Naive thymus-derived CD4-positive, alpha-beta T cell (primary cell): ENCODE measurements at regions of chr1 and their contacts with region 1.

Region 1: GRCh38 chr1:181088079-181089016 is at the start of gene IER5:
- DNase-seq: peak; percentile 86 to 97 (median 92)
- ATAC-seq: peak; percentile 82
- H3K4me3 ChIP-seq: peak within 1 kb of the TSS; percentile 83
- H3K4me3 Mint-ChIP-seq: peak within 1 kb of the TSS; percentile 89 to 100 (median 99)
- H3K27ac ChIP-seq: peak within 1 kb of the TSS; percentile 98
- H3K27ac Mint-ChIP-seq: peak within 1 kb of the TSS; percentile 92 to 98 (median 97)
- H3K4me1 ChIP-seq: peaks cover 12 to 23% of the 10 kb centered on the region in 2 donors
- H3K4me1 Mint-ChIP-seq: peaks cover 25 to 56% (median 46%) of the 10 kb centered on the region in 7 donors
- H3K27me3 ChIP-seq: no peaks in the 10 kb centered on the region
- H3K27me3 Mint-ChIP-seq: peaks cover 0 to 9% (median 0%) of the 10 kb centered on the region in 5 donors
- total RNA-seq, gene IER5: 12.7 to 86.9 (median 46.0) TPM

Region 2: GRCh38 chr1:180515864-180516388 is 572.4 kb before region 1 on chr1:
- CTCF ChIA-PET with region 1: interaction called, 3 read pairs
- POLR2A ChIA-PET with region 1: interaction called, 3 read pairs
- intact Hi-C with region 1: loop called in 1 of 2 experiments (anchors 1 kb)
- DNase-seq: peak in 8 of 9 donors; percentile 33 to 65 (median 53)
- ATAC-seq: peak; percentile 94
- H3K4me3 ChIP-seq: no peak overlapping the region
- H3K4me3 Mint-ChIP-seq: no peak overlapping the region
- H3K27ac ChIP-seq: no peak overlapping the region
- H3K27ac Mint-ChIP-seq: no peak overlapping the region
- H3K4me1 ChIP-seq: no peaks in the 10 kb centered on the region
- H3K4me1 Mint-ChIP-seq: peaks cover 0 to 3% (median 0%) of the 10 kb centered on the region in 7 donors
- H3K27me3 ChIP-seq: no peaks in the 10 kb centered on the region
- H3K27me3 Mint-ChIP-seq: peaks cover 0 to 13% (median 10%) of the 10 kb centered on the region in 5 donors

Region 3: DNA sequence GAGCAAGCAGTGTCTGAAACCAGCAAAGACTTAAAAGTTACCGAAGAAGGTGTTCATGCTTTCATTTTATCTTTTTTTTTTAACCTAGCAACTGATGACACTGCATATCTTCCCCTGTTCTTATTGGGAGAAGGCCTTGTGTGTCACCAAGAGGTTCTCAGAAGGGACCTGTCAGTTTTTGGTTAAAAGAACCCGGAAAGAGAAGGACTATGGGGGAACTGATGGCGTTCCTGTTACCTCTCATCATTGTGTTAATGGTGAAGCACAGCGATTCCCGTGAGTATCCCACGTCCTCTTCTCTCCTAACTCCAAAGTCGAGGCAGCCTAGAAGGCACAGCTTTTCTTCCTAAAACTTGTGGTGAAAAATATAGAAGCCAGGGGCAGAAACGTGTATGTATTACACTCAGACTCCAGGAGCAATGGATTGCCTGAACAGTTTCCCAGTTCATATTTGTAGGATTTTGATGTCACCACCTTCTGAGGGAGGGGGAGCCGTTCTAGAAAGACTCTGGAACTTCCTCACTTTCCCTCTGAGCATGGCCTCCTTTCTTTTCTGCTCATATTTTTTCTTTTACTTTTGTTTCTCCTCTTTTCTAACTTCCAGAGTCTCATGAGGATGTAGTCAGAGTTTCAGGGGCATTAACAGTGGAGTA is 54.4 kb before region 1 on chr1 and contains the start of gene MR1:
- CTCF ChIA-PET with region 1: interaction called, 5 read pairs
- POLR2A ChIA-PET with region 1: interaction called, 18 read pairs
- intact Hi-C with region 1: loop called (anchors 1 kb)
- DNase-seq: peak in 8 of 9 donors; percentile 32 to 92 (median 88)
- ATAC-seq: peak; percentile 97
- H3K4me3 ChIP-seq: peak within 1 kb of the TSS; percentile 77
- H3K4me3 Mint-ChIP-seq: peak within 1 kb of the TSS; percentile 84 to 99 (median 97)
- H3K27ac ChIP-seq: peak within 1 kb of the TSS; percentile 95
- H3K27ac Mint-ChIP-seq: peak within 1 kb of the TSS; percentile 95 to 100 (median 98)
- H3K4me1 ChIP-seq: peaks cover 32 to 42% of the 10 kb centered on the region in 2 donors
- H3K4me1 Mint-ChIP-seq: peaks cover 39 to 69% (median 61%) of the 10 kb centered on the region in 7 donors
- H3K27me3 ChIP-seq: no peaks in the 10 kb centered on the region
- H3K27me3 Mint-ChIP-seq: peaks cover 0 to 6% (median 0%) of the 10 kb centered on the region in 5 donors
- total RNA-seq, gene MR1: 19.8 to 35.8 (median 29.7) TPM

Region 4: GRCh38 chr1:181105134-181106021 is 17.0 kb after region 1 on chr1:
- CTCF ChIA-PET with region 1: interaction called, 4 read pairs
- POLR2A ChIA-PET with region 1: interaction called, 264 read pairs
- intact Hi-C with region 1: loop called (anchors 1 kb)
- DNase-seq: peak; percentile 81 to 94 (median 90)
- ATAC-seq: peak; percentile 94
- H3K4me3 ChIP-seq: peak overlapping the region; percentile 61
- H3K4me3 Mint-ChIP-seq: peak overlapping the region; percentile 84 to 96 (median 91)
- H3K27ac ChIP-seq: peak overlapping the region; percentile 85
- H3K27ac Mint-ChIP-seq: peak overlapping the region; percentile 69 to 97 (median 89)
- H3K4me1 ChIP-seq: peaks cover 16 to 20% of the 10 kb centered on the region in 2 donors
- H3K4me1 Mint-ChIP-seq: peaks cover 22 to 76% (median 61%) of the 10 kb centered on the region in 7 donors
- H3K27me3 ChIP-seq: no peaks in the 10 kb centered on the region
- H3K27me3 Mint-ChIP-seq: peaks cover 0 to 43% (median 0%) of the 10 kb centered on the region in 5 donors

Region 5: GRCh38 chr1:181159451-181160140 is 71.2 kb after region 1 on chr1:
- CTCF ChIA-PET with region 1: interaction called, 66 read pairs
- POLR2A ChIA-PET with region 1: interaction called, 29 read pairs
- intact Hi-C with region 1: no loop called
- DNase-seq: peak; percentile 20 to 74 (median 68)
- ATAC-seq: peak; percentile 75
- H3K4me3 ChIP-seq: peak overlapping the region; percentile 28
- H3K4me3 Mint-ChIP-seq: peak overlapping the region; percentile 48 to 83 (median 72)
- H3K27ac ChIP-seq: no peak overlapping the region
- H3K27ac Mint-ChIP-seq: peak overlapping the region; percentile 80 to 98 (median 91)
- H3K4me1 ChIP-seq: peaks cover 25 to 37% of the 10 kb centered on the region in 2 donors
- H3K4me1 Mint-ChIP-seq: peaks cover 25 to 59% (median 45%) of the 10 kb centered on the region in 7 donors
- H3K27me3 ChIP-seq: no peaks in the 10 kb centered on the region
- H3K27me3 Mint-ChIP-seq: peaks cover 0 to 50% (median 0%) of the 10 kb centered on the region in 5 donors

Region 6: GRCh38 chr1:181424786-181425403 is 336.5 kb after region 1 on chr1:
- CTCF ChIA-PET with region 1: no interaction called
- POLR2A ChIA-PET with region 1: no interaction called
- intact Hi-C with region 1: loop called (anchors 1 to 10 kb)
- DNase-seq: peak; percentile 45 to 82 (median 76)
- ATAC-seq: peak; percentile 86
- H3K4me3 ChIP-seq: peak overlapping the region; percentile 26
- H3K4me3 Mint-ChIP-seq: peak overlapping the region; percentile 59 to 86 (median 74)
- H3K27ac ChIP-seq: no peak overlapping the region
- H3K27ac Mint-ChIP-seq: peak overlapping the region in 8 of 9 donors; percentile 16 to 86 (median 58)
- H3K4me1 ChIP-seq: peaks cover 3 to 16% of the 10 kb centered on the region in 2 donors
- H3K4me1 Mint-ChIP-seq: peaks cover 0 to 12% (median 10%) of the 10 kb centered on the region in 7 donors
- H3K27me3 ChIP-seq: no peaks in the 10 kb centered on the region
- H3K27me3 Mint-ChIP-seq: peaks cover 17 to 29% (median 22%) of the 10 kb centered on the region in 5 donors